ENCODE measurements at regions of chr12 and their contacts with region 1.

Region 1: DNA sequence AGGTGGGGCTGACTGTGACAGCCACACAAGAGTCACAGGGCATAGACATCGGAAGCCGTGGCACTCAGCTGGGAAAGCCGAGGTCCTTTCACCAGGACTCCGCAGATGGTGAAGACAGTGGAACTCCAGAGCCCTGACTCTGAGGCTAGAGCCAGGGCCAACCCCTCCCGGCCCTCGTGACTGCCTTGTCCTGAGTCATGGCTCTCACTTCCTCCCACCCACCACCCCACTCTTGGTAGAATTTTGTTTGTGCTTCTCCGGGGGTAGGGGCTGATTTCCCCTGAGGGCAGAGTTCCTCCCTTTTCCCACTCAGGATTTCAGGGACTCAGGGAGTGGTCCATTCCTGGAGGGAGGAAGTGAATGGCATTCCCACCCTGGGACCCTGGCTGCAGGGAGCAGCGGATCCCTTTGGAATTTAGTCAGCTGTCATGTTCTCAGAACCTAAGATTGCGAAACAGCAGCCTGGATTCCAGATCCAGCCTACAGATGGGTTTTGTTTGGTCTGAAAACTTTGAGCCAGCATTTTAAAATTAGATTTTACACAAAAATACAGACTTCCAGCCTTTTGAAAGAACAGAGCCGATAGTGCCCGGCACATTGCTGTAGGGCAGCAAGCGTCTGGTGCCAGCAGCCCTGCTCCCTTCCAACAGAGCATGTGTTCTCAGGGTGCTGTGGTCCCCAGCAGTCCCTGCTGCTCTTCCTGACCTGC is 50.7 kb downstream of the TPCN1 start:
- DNase-seq: peak; percentile 88 to 91
- ATAC-seq: peak; percentile 95 to 97 (median 96)
- H3K4me3 ChIP-seq: peak overlapping the region; percentile 27
- H3K27ac ChIP-seq: peak overlapping the region; percentile 83
- H3K4me1 ChIP-seq: peaks cover 25% of the 10 kb centered on the region
- H3K27me3 ChIP-seq: no peaks in the 10 kb centered on the region
- CTCF ChIP-seq: no peak

Region 2: GRCh38 chr12:112447106-112447505 is 824.9 kb before region 1 on chr12:
- intact Hi-C with region 1: no loop called
- DNase-seq: no peak
- ATAC-seq: no peak
- H3K4me3 ChIP-seq: no peak overlapping the region
- H3K27ac ChIP-seq: no peak overlapping the region
- H3K4me1 ChIP-seq: no peaks in the 10 kb centered on the region
- H3K27me3 ChIP-seq: no peaks in the 10 kb centered on the region
- CTCF ChIP-seq: no peak

Region 3: DNA sequence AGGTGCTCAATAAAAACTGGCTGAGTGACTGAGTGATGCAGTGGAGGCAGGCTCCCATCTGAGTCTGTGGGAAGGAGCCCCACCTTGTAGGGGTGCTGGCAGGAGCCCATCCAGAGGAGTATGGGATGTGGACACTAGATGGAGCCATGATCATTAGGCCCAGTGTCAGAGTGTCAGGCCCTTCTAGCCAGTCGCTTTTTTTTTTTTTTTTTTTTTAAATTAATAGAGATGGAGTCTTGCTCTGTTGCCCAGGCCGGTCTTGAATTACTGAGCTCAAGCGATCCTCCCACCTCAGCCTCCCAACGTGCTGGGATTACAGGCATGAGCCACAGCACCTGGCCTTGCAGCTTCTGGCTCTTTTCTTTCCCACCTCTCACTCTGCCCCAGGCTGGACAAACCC is 75.0 kb before region 1 on chr12:
- intact Hi-C with region 1: loop called in 1 of 2 experiments (anchors 5 kb)
- DNase-seq: peak; percentile 63 to 73
- ATAC-seq: peak; percentile 74 to 90 (median 86)
- H3K4me3 ChIP-seq: no peak overlapping the region
- H3K27ac ChIP-seq: no peak overlapping the region
- H3K4me1 ChIP-seq: peaks cover 16% of the 10 kb centered on the region
- H3K27me3 ChIP-seq: no peaks in the 10 kb centered on the region
- CTCF ChIP-seq: peak; percentile 62

Region 4: GRCh38 chr12:113310489-113310888 is 38.5 kb after region 1 on chr12:
- intact Hi-C with region 1: no loop called
- DNase-seq: no peak
- ATAC-seq: no peak
- H3K4me3 ChIP-seq: no peak overlapping the region
- H3K27ac ChIP-seq: no peak overlapping the region
- H3K4me1 ChIP-seq: peaks cover 4% of the 10 kb centered on the region
- H3K27me3 ChIP-seq: no peaks in the 10 kb centered on the region
- CTCF ChIP-seq: no peak